Activated CD4-positive, alpha-beta T cell treated with anti-CD3 and anti-CD28 coated beads for 36 hours (primary cell): ENCODE measurements at regions of chr3 and their contacts with region 1.

Region 1: GRCh38 chr3:193040836-193041672 is 123.4 kb upstream of the MB21D2 start:
- DNase-seq: no peak
- ATAC-seq: no peak
- H3K4me3 Mint-ChIP-seq: no peak overlapping the region
- H3K27ac Mint-ChIP-seq: no peak overlapping the region
- H3K4me1 Mint-ChIP-seq: no peaks in the 10 kb centered on the region
- H3K27me3 Mint-ChIP-seq: no peaks in the 10 kb centered on the region

Region 2: DNA sequence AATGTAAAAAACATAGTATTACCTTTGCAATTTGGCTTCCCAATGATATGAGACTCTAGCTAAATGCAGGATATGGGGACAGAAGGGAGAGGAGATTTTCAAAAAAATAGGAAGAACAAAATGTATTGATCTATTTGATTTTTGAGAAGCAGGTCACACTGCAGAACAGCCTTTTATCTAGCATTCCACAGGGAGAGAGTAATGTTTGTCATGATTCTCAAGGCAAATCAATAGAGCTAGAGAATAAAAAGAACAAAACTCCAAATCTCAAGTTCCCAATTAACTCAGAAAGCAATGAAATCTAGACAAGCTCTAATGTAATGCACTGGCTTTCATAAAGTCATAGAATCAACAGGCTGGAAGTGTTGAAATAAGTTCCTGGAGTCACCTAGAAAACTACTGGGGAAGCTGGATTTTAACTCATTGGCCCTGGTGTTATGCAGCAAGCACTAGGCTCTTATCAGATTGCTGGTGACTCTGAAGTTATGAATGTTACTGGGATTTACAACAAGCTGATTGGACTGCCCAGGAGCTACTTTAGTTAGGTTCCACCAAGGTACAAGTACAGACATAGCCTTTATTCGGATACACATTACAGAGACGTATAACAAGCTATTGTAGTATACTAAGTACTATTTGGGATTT is 756.5 kb before region 1 on chr3:
- CTCF ChIA-PET with region 1: no interaction called
- POLR2A ChIA-PET with region 1: no interaction called
- intact Hi-C with region 1: no loop called
- DNase-seq: no peak
- ATAC-seq: no peak
- H3K4me3 Mint-ChIP-seq: no peak overlapping the region
- H3K27ac Mint-ChIP-seq: no peak overlapping the region
- H3K4me1 Mint-ChIP-seq: no peaks in the 10 kb centered on the region
- H3K27me3 Mint-ChIP-seq: no peaks in the 10 kb centered on the region

Region 3: GRCh38 chr3:192467230-192468140 is 573.6 kb before region 1 on chr3:
- CTCF ChIA-PET with region 1: no interaction called
- POLR2A ChIA-PET with region 1: no interaction called
- intact Hi-C with region 1: loop called (anchors 1 to 2 kb)
- DNase-seq: peak; percentile 66
- ATAC-seq: peak; percentile 79
- H3K4me3 Mint-ChIP-seq: no peak overlapping the region
- H3K27ac Mint-ChIP-seq: no peak overlapping the region
- H3K4me1 Mint-ChIP-seq: no peaks in the 10 kb centered on the region
- H3K27me3 Mint-ChIP-seq: peaks cover 27% of the 10 kb centered on the region

Region 4: DNA sequence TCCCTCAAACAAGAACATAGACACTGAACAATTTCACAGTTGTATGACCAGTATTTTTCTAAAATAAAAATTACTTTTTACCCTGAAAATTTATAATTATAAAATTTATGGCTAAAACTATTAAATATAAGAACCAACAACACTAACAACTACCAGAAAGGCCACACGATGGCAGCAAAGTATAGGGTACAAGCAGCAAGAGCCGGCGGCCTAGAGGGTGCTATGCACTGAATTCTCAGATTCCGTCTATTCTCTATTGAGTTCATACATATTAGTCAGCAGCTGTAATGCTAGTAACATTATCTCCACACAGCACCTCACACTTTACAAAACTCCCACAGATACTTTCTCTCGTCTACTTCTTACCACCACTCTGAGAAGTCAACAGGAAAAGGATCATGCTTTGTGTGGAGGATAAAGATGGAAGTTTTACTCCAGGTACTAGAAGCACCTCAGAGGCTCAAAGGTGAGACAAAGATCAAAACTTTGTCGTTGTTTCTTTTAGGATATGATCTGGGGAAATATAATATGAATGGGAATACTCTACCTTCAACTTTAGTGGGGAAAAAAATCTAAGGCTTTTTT is 474.3 kb before region 1 on chr3:
- CTCF ChIA-PET with region 1: interaction called, 5 read pairs
- POLR2A ChIA-PET with region 1: no interaction called
- intact Hi-C with region 1: loop called (anchors 2 kb)
- DNase-seq: peak; percentile 83
- ATAC-seq: peak; percentile 83
- H3K4me3 Mint-ChIP-seq: no peak overlapping the region
- H3K27ac Mint-ChIP-seq: no peak overlapping the region
- H3K4me1 Mint-ChIP-seq: peaks cover 7% of the 10 kb centered on the region
- H3K27me3 Mint-ChIP-seq: peaks cover 16% of the 10 kb centered on the region

Region 5: DNA sequence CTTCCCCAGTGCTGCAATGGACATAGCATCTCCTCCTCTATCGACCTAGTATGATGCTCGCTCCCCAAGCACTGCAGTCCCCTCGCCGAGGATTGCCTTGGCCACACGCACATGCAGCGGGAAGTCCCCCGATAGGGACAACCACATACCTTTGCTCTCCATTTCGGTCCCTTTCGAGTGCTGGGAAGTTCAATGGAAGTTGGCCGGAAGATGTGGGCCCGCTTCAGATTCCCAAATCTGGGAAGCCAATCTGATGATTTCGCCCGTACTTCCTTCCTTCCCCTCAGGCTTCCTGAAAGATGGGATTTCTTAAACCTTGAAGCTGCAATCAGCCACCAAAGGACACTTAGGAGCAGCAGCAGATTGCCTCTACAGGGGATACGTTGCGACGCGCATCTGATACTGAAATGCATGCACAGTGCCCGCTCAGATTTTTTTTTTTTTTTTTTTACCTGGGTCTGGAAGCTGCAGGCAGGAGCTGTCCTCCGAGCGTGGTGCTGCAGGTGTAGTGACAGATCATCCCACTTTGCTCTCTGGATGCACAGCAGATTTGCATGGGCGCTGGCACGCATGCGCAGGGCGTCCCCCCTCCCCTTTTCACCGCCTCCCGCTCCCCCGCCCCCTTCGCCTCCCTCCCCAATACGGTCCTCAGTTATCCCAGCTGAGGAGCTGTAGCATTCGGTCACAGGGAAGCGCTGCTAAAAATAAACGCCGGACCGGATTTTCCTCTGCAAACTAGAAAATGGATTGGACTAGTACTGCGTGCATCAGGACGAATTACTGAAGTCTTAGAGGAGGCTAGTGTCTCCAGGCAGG is 313.8 kb before region 1 on chr3 and contains the start of gene FGF12:
- CTCF ChIA-PET with region 1: no interaction called
- POLR2A ChIA-PET with region 1: no interaction called
- intact Hi-C with region 1: no loop called
- DNase-seq: peak; percentile 42
- ATAC-seq: no peak
- H3K4me3 Mint-ChIP-seq: no peak within 1 kb of the TSS
- H3K27ac Mint-ChIP-seq: no peak within 1 kb of the TSS
- H3K4me1 Mint-ChIP-seq: peaks cover 3% of the 10 kb centered on the region
- H3K27me3 Mint-ChIP-seq: peaks cover 28% of the 10 kb centered on the region
- total RNA-seq, gene FGF12: not detected

Region 6: GRCh38 chr3:192917404-192918274 is 123.4 kb before region 1 on chr3 and contains the start of gene MB21D2:
- CTCF ChIA-PET with region 1: no interaction called
- POLR2A ChIA-PET with region 1: no interaction called
- intact Hi-C with region 1: loop called in 1 of 2 experiments (anchors 5 kb)
- DNase-seq: peak; percentile 67
- ATAC-seq: peak; percentile 63
- H3K4me3 Mint-ChIP-seq: peak within 1 kb of the TSS; percentile 82
- H3K27ac Mint-ChIP-seq: peak within 1 kb of the TSS; percentile 71
- H3K4me1 Mint-ChIP-seq: peaks cover 20% of the 10 kb centered on the region
- H3K27me3 Mint-ChIP-seq: peaks cover 65% of the 10 kb centered on the region
- total RNA-seq, gene MB21D2: 2.2 to 2.5 TPM